IMR-90 (cell line): ENCODE measurements at regions of chr3 and their contacts with region 1.

Region 1: GRCh38 chr3:145889730-145890129 is 271.3 kb downstream of the PLOD2 start:
- DNase-seq: no peak
- ATAC-seq: no peak
- H3K4me3 ChIP-seq: no peak overlapping the region
- H3K27ac ChIP-seq: no peak overlapping the region
- H3K4me1 ChIP-seq: no peaks in the 10 kb centered on the region
- H3K27me3 ChIP-seq: no peaks in the 10 kb centered on the region
- CTCF ChIP-seq: no peak
- POLR2A ChIP-seq: no peak
- RAD21 ChIP-seq: no peak

Region 2: GRCh38 chr3:145623349-145623748 is 266.4 kb before region 1 on chr3:
- CTCF ChIA-PET with region 1: no interaction called
- POLR2A ChIA-PET with region 1: no interaction called
- dilution Hi-C with region 1: no loop called
- in situ Hi-C with region 1: no loop called
- intact Hi-C with region 1: no loop called
- DNase-seq: no peak
- ATAC-seq: no peak
- H3K4me3 ChIP-seq: no peak overlapping the region
- H3K27ac ChIP-seq: no peak overlapping the region
- H3K4me1 ChIP-seq: no peaks in the 10 kb centered on the region
- H3K27me3 ChIP-seq: no peaks in the 10 kb centered on the region
- CTCF ChIP-seq: no peak
- POLR2A ChIP-seq: no peak
- RAD21 ChIP-seq: no peak

Region 3: GRCh38 chr3:146052791-146053310 is 163.1 kb after region 1 on chr3:
- CTCF ChIA-PET with region 1: no interaction called
- POLR2A ChIA-PET with region 1: no interaction called
- dilution Hi-C with region 1: no loop called
- in situ Hi-C with region 1: no loop called
- intact Hi-C with region 1: loop called (anchors 5 kb)
- DNase-seq: peak; percentile 10
- ATAC-seq: no peak
- H3K4me3 ChIP-seq: no peak overlapping the region
- H3K27ac ChIP-seq: no peak overlapping the region
- H3K4me1 ChIP-seq: no peaks in the 10 kb centered on the region; the same call in 1 of the 2 replicates
- H3K27me3 ChIP-seq: no peaks in the 10 kb centered on the region
- CTCF ChIP-seq: no peak
- POLR2A ChIP-seq: no peak
- RAD21 ChIP-seq: no peak

Region 4: GRCh38 chr3:146577662-146578061 is 687.9 kb after region 1 on chr3:
- CTCF ChIA-PET with region 1: no interaction called
- POLR2A ChIA-PET with region 1: no interaction called
- dilution Hi-C with region 1: no loop called
- in situ Hi-C with region 1: no loop called
- intact Hi-C with region 1: no loop called
- DNase-seq: peak; percentile 73
- ATAC-seq: peak; percentile 66; the same call in 1 of the 2 replicates
- H3K4me3 ChIP-seq: no peak overlapping the region
- H3K27ac ChIP-seq: no peak overlapping the region
- H3K4me1 ChIP-seq: peaks cover 2% of the 10 kb centered on the region; the same call in 1 of the 2 replicates
- H3K27me3 ChIP-seq: no peaks in the 10 kb centered on the region
- CTCF ChIP-seq: peak; percentile 70
- POLR2A ChIP-seq: no peak
- RAD21 ChIP-seq: peak; percentile 81